Mammary epithelial cell (primary cell): ENCODE measurements at regions of chr7 and their contacts with region 1.

Region 1: GRCh38 chr7:95690367-95690947 is 81.9 kb upstream of the DYNC1I1 start:
- DNase-seq: peak; percentile 40
- H3K4me3 ChIP-seq: no peak overlapping the region
- H3K27ac ChIP-seq: peak overlapping the region; percentile 33
- H3K4me1 ChIP-seq: peaks cover 32% of the 10 kb centered on the region
- H3K27me3 ChIP-seq: no peaks in the 10 kb centered on the region
- CTCF ChIP-seq: peak; percentile 35 to 45

Region 2: DNA sequence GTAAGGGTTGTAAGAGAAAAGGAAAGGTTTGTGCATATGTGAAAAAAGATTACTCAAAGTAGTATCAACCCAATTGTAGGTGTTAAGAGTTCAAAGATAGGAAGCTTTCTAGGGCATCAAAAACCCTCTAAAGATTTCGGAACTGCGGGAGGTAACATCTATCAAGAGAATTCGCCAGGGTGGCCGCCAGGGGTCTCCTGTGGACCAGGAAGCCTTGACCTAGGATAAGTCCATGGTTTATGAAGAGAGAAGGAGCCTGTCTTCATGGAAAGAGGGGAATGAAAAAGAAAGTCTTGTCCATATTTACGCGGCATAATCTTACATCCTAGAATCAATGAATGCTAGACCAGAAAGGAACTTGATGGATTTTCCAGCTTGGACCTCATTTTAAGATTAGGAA is 1975.2 kb before region 1 on chr7:
- CTCF ChIA-PET with region 1: interaction called, 10 read pairs
- dilution Hi-C with region 1: no loop called
- in situ Hi-C with region 1: no loop called
- intact Hi-C with region 1: no loop called
- DNase-seq: peak; percentile 16
- H3K4me3 ChIP-seq: no peak overlapping the region
- H3K27ac ChIP-seq: no peak overlapping the region
- H3K4me1 ChIP-seq: peaks cover 18% of the 10 kb centered on the region
- H3K27me3 ChIP-seq: peaks cover 14% of the 10 kb centered on the region
- CTCF ChIP-seq: peak; percentile 57 to 62

Region 3: DNA sequence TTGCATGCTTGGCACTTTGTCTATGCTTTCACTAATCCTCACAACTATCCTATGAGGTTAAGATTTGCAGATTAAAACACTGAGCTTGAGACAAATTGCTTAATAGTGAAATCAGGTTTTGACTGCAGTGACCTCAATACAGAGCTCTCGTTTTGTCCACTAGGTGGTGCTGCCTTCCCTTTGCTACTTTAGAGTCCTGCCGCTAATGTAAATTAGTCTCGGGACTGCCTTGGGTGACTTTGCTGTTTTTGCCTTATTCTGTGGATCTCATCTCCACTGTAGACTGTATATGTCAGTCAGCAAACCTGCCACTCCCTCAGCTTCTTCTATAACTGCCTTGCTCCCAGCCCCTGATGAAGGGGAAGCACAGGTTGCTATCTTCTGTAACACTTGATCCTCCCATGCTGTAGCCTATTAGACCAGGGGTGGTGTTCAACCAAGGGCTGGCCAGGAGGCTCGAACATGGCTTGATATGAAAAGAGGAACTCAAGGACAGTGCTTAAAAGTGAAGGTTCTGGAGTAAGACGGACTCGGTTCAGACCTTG is 178.7 kb before region 1 on chr7:
- CTCF ChIA-PET with region 1: interaction called, 11 read pairs
- dilution Hi-C with region 1: no loop called
- in situ Hi-C with region 1: loop called in 1 of 2 experiments (anchors 10 kb)
- intact Hi-C with region 1: loop called (anchors 1 kb)
- DNase-seq: peak; percentile 44
- H3K4me3 ChIP-seq: no peak overlapping the region
- H3K27ac ChIP-seq: no peak overlapping the region
- H3K4me1 ChIP-seq: no peaks in the 10 kb centered on the region
- H3K27me3 ChIP-seq: peaks cover 2% of the 10 kb centered on the region
- CTCF ChIP-seq: peak; percentile 87 to 93

Region 4: DNA sequence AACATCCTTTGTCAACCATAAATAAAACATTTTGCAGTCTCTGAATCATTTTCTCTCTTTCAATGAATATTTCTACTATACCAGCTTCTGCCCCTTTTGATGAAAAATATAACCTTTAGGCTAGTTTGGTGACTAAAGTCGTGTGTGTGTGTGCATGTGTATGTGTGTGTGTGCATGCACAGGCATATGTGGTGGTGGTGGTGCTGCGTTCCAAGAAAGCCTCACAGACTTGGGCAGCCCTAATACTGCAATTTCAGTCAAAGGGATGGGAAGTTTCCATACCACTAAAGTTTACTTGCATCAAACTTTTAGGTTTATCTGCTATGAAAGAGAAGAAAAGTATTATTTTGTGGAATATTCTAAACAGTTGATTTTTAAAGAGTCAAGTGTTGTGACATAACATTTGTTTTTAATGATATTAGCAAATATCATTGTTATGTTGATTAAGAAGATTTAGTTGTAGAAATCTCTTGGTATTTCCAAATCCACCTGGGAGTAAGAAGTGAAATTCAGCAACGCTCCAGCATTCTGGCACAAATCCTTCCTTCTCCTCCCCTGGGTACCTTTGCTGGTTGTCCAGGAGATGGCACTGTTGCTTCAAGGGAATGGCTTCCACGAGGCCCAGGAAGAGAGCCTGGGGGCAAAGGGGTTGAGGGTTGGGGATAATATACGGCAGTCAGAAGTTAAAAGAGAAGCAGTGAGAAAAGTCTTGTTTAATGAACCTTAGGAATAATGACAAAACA is 163.3 kb before region 1 on chr7:
- CTCF ChIA-PET with region 1: interaction called, 3 read pairs
- dilution Hi-C with region 1: no loop called
- in situ Hi-C with region 1: no loop called
- intact Hi-C with region 1: loop called (anchors 1 kb)
- DNase-seq: peak; percentile 20
- H3K4me3 ChIP-seq: no peak overlapping the region
- H3K27ac ChIP-seq: no peak overlapping the region
- H3K4me1 ChIP-seq: no peaks in the 10 kb centered on the region
- H3K27me3 ChIP-seq: peaks cover under 1% of the 10 kb centered on the region
- CTCF ChIP-seq: peak; percentile 85 to 95

Region 5: DNA sequence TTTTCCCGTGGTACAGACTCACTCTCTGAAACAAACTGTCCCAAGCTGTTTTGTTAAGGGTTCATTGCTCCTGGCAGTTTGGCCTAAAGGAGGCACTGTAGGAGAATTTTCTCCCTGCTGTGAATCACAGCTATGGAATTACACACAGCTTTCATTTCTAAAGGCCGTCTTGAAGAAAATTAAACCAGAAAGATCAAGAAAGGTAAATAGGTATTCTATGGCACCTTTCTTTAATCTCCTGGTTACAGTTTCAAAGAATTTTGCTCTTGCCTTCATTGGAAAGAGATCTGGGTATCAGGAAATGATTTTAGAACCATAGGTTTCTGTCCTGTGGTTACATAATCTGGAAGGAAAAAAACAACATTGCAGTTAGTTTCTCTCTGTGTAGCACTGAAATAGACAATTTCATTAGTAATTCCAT is 145.4 kb before region 1 on chr7:
- CTCF ChIA-PET with region 1: interaction called, 3 read pairs
- dilution Hi-C with region 1: no loop called
- in situ Hi-C with region 1: loop called (anchors 10 kb)
- intact Hi-C with region 1: loop called (anchors 1 kb)
- DNase-seq: peak; percentile 54
- H3K4me3 ChIP-seq: peak overlapping the region in 1 of 3 experiments; percentile 25
- H3K27ac ChIP-seq: no peak overlapping the region
- H3K4me1 ChIP-seq: peaks cover 6% of the 10 kb centered on the region
- H3K27me3 ChIP-seq: no peaks in the 10 kb centered on the region
- CTCF ChIP-seq: peak; percentile 47 to 74

Region 6: DNA sequence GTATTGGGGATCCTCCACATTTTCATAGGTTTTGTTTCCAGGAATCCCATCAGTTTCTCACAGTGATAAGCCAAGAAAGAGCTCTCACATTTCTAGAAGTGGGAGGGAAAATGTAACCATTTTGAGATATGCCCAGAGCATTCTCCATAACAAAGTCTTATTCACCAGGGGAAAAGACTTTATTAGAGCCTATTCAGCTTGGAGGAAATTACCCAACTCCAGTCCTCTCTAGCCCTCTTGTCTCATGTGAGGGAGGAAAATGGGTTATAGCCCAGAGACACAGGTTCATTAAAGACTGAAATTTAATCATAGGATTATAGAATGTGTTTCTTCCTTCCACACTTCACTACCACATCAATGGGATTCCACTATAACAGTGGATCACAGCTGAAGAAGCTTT is 20.3 kb after region 1 on chr7:
- CTCF ChIA-PET with region 1: no interaction called
- dilution Hi-C with region 1: no loop called
- in situ Hi-C with region 1: no loop called
- intact Hi-C with region 1: no loop called
- DNase-seq: no peak
- H3K4me3 ChIP-seq: no peak overlapping the region
- H3K27ac ChIP-seq: no peak overlapping the region
- H3K4me1 ChIP-seq: no peaks in the 10 kb centered on the region
- H3K27me3 ChIP-seq: no peaks in the 10 kb centered on the region
- CTCF ChIP-seq: no peak